MCF 10A (cell line): ENCODE measurements at regions of chr10 and their contacts with region 1.

Region 1: DNA sequence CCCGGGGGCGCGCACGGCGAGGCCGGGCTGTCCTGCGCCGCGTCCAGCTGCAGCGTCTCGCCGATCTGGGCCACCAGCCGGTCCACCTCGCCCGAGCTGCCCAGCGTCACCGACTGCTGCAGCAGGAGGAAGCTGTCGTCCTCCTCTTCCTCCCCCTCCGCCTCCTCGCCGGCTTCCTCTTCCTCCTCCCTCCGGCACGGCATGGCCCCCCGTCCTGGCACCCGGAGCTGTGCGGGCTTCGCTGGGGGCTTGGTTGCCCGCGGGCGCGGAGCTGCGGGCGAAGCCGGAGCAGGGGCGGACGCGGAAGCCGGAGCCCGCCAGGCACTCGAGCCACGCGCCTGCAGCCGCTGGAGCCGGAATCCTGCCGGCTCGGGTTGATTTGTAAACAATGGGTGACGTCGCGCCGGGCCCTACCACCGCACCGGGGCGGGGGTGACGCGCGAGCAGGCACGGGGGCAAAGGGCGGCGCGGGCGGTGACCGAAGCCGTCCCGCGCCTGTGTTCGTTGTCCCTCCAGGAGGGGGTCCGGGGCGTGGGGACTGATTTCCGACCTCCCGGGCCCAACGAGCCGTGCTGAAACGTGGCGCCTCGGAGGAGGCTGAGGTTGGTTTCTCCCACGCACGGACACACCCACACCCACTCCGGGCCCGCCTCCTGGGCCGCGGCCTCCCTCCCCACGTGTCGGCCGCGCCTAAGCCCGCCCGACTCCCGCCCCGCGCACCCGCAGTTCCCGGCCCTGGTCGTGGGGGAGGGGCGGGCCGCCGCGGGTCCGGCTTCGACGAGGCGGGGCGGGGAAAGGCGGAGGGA is at the start of gene FRAT2:
- DNase-seq: peak; percentile 89
- H3K4me3 Mint-ChIP-seq: peak within 1 kb of the TSS; percentile 93
- H3K27ac Mint-ChIP-seq: peak within 1 kb of the TSS; percentile 98
- H3K4me1 Mint-ChIP-seq: peaks cover 30% of the 10 kb centered on the region
- H3K27me3 Mint-ChIP-seq: no peaks in the 10 kb centered on the region
- CTCF ChIP-seq: no peak
- total RNA-seq, gene FRAT2: 9.0 and 11.4 TPM in 2 replicates

Region 2: GRCh38 chr10:96532496-96532895 is 802.1 kb before region 1 on chr10:
- CTCF ChIA-PET with region 1: no interaction called
- POLR2A ChIA-PET with region 1: no interaction called
- intact Hi-C with region 1: no loop called
- DNase-seq: peak; percentile 39
- H3K4me3 Mint-ChIP-seq: no peak overlapping the region
- H3K27ac Mint-ChIP-seq: no peak overlapping the region
- H3K4me1 Mint-ChIP-seq: no peaks in the 10 kb centered on the region
- H3K27me3 Mint-ChIP-seq: no peaks in the 10 kb centered on the region
- CTCF ChIP-seq: no peak

Region 3: GRCh38 chr10:97270523-97271154 is 63.9 kb before region 1 on chr10:
- CTCF ChIA-PET with region 1: interaction called, 4 read pairs
- POLR2A ChIA-PET with region 1: interaction called, 11 read pairs
- intact Hi-C with region 1: no loop called
- DNase-seq: peak; percentile 20
- H3K4me3 Mint-ChIP-seq: no peak overlapping the region
- H3K27ac Mint-ChIP-seq: no peak overlapping the region
- H3K4me1 Mint-ChIP-seq: no peaks in the 10 kb centered on the region
- H3K27me3 Mint-ChIP-seq: no peaks in the 10 kb centered on the region
- CTCF ChIP-seq: no peak

Region 4: GRCh38 chr10:97292097-97292862 is 42.3 kb before region 1 on chr10 and contains the start of gene ARHGAP19:
- CTCF ChIA-PET with region 1: interaction called, 10 read pairs
- POLR2A ChIA-PET with region 1: interaction called, 26 read pairs
- intact Hi-C with region 1: loop called (anchors 1 kb)
- DNase-seq: peak; percentile 99
- H3K4me3 Mint-ChIP-seq: peak within 1 kb of the TSS; percentile 87
- H3K27ac Mint-ChIP-seq: peak within 1 kb of the TSS; percentile 88
- H3K4me1 Mint-ChIP-seq: peaks cover 4% of the 10 kb centered on the region
- H3K27me3 Mint-ChIP-seq: no peaks in the 10 kb centered on the region
- CTCF ChIP-seq: no peak
- total RNA-seq, gene ARHGAP19: 10.6 and 11.7 TPM in 2 replicates

Region 5: GRCh38 chr10:97400665-97401454 is 66.3 kb after region 1 on chr10 and contains the start of gene RRP12:
- CTCF ChIA-PET with region 1: interaction called, 3 read pairs
- POLR2A ChIA-PET with region 1: interaction called, 69 read pairs
- intact Hi-C with region 1: no loop called
- DNase-seq: peak; percentile 98
- H3K4me3 Mint-ChIP-seq: peak within 1 kb of the TSS; percentile 90
- H3K27ac Mint-ChIP-seq: peak within 1 kb of the TSS; percentile 98
- H3K4me1 Mint-ChIP-seq: no peaks in the 10 kb centered on the region
- H3K27me3 Mint-ChIP-seq: no peaks in the 10 kb centered on the region
- CTCF ChIP-seq: no peak
- total RNA-seq, gene RRP12: 66.1 and 86.7 TPM in 2 replicates

Region 6: GRCh38 chr10:97425964-97426775 is 91.6 kb after region 1 on chr10 and contains the start of gene PGAM1:
- CTCF ChIA-PET with region 1: interaction called, 6 read pairs
- POLR2A ChIA-PET with region 1: interaction called, 14 read pairs
- intact Hi-C with region 1: no loop called
- DNase-seq: peak; percentile 95
- H3K4me3 Mint-ChIP-seq: peak within 1 kb of the TSS; percentile 77
- H3K27ac Mint-ChIP-seq: peak within 1 kb of the TSS; percentile 80
- H3K4me1 Mint-ChIP-seq: peaks cover 12% of the 10 kb centered on the region
- H3K27me3 Mint-ChIP-seq: no peaks in the 10 kb centered on the region
- CTCF ChIP-seq: peak; percentile 53
- total RNA-seq, gene PGAM1: 235 and 248 TPM in 2 replicates